Posterior cingulate gyrus (tissue), 11 donors: ENCODE measurements at regions of chr3 and their contacts with region 1.

Region 1: DNA sequence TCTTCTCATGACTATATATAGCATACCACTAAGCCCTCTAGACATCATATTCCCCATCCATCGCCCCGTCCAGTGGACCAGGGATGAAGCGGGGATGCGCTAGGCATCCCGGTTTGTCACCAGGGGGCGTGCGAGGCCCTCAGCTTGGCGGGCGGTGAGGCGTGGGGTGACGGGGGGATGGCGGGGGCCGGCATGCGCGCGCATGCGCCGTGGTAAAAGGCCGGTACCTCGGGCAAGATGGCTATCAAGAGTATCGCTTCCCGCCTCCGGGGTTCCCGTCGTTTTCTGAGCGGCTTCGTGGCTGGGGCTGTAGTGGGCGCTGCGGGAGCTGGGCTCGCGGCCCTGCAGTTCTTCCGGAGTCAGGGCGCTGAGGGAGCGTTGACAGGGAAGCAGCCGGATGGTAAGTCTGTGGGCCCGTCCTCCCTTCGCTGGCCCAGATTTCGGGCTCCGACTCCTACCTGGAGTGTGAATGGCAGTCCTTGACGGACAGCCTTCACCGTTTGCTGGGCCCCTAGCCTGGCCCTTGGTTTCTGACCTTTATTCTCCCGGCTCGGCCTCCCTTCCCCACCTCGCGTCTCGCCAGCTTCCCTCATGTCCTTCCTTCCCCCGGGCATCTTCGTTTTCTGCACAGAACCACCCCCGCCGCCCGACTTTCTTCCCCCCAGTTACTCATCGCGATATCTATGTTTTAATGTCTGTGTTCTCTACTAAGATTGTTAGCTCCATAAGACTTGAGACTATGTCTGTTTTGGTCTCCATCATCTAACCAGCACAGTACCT is at the start of gene EXOG:
- DNase-seq: peak; percentile 90 to 98 (median 96)

Region 2: GRCh38 chr3:38136777-38137614 is 359.3 kb before region 1 on chr3 and contains the start of gene ACAA1:
- intact Hi-C with region 1: loop called (anchors 2 kb)
- DNase-seq: peak; percentile 98 to 100 (median 100)

Region 3: GRCh38 chr3:38397320-38397719 is 99.0 kb before region 1 on chr3:
- intact Hi-C with region 1: no loop called
- DNase-seq: no peak

Region 4: DNA sequence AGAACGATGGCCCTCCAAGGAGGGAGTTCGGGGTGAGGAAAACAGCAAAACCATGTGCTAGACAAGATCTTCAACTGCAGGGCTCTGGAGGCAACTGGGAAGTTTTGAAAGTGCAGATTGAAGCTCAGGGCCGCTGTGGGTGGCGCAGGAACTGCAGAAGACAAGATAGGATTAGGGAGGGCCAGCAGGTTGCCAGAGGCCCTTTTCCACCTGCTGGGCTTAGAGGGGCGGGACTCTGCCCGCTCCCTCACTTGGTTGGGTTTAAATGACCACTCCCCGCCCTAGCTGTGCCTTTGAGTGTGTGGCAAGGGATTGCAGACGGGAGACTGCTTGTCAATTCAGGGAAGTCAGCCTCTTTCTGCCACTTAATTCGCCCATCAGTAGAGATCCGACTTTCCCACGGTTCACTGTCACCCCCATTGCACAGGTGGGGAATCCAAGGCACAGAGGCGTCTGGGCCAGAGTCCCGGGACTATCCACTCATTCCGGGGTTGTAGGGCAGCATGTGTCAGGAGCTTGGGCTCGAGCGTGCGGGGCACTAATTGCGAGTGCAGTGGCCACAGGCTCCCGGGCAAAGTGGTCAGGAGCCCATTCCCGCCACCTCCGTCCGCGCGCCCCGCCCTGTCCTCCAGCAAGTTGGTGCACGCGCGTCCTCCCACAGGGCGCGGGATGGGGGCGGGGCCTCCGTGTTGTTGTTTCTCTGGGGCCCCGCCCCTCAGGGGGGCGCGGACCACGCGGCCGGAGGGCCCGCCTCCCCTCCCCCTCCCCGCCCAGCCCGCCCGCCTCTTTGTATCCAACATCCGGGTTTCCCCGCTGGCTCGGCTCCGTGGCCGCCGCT is 43.0 kb before region 1 on chr3 and contains the start of gene ACVR2B:
- intact Hi-C with region 1: loop called (anchors 5 kb)
- DNase-seq: peak; percentile 73 to 98 (median 85)

Region 5: DNA sequence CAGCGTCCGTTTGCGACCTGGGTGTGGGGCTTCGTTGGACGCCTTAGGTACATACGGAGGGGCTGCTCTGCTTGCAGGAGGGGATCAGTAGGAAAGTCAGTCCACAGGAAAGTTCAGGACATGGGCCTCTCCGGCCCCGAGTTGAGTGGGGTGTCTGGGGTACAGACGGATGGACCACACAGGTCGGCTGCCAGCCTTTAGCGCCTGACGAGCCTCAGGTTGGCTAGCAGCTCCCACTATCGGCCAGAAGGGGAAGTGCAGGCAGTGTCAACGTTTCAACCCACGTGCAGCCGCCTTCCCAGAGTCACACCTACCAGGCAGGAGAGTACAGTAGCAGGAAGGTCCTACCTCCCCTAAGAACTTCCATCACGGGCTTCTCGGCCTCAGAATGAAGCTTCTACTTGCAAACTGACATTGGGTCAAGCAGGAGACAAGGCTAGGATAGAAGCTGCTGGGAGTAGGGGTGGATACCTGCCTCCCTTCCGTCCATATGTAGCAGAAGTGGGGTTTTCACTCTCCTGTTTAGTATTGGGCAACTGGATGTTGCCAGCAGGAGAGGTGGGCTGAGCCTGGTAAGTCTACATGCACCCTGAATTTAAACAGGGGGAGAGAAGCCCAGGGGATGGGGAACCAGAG is 155.0 kb after region 1 on chr3:
- intact Hi-C with region 1: loop called (anchors 2 kb)
- DNase-seq: peak in 5 of 10 donors; percentile 45 to 68 (median 54)

Region 6: GRCh38 chr3:38662544-38662943 is 166.2 kb after region 1 on chr3:
- intact Hi-C with region 1: no loop called
- DNase-seq: no peak